B cell (primary cell): ENCODE measurements at regions of chr7 and their contacts with region 1.

Region 1: GRCh38 chr7:149125863-149126661 is at the start of gene ZNF425:
- DNase-seq: peak; percentile 95
- ATAC-seq: peak; percentile 84
- H3K4me3 ChIP-seq: peak within 1 kb of the TSS; percentile 64 to 98 (median 88)
- H3K4me3 Mint-ChIP-seq: peak within 1 kb of the TSS; percentile 97
- H3K27ac ChIP-seq: peak within 1 kb of the TSS; percentile 85 to 89
- H3K27ac Mint-ChIP-seq: peak within 1 kb of the TSS; percentile 99
- H3K4me1 ChIP-seq: peaks cover 12 to 14% of the 10 kb centered on the region in 2 donors
- H3K4me1 Mint-ChIP-seq: peaks cover 22% of the 10 kb centered on the region
- H3K27me3 ChIP-seq: no peaks in the 10 kb centered on the region
- H3K27me3 Mint-ChIP-seq: no peaks in the 10 kb centered on the region
- CTCF ChIP-seq: peak; percentile 89
- total RNA-seq, gene ZNF425: 2.8 and 3.3 TPM in 2 replicates

Region 2: GRCh38 chr7:149195180-149196150 is 69.4 kb after region 1 on chr7 and contains the start of gene ZNF282:
- CTCF ChIA-PET with region 1: interaction called, 13 read pairs
- POLR2A ChIA-PET with region 1: interaction called, 7 read pairs
- intact Hi-C with region 1: loop called (anchors 5 kb)
- DNase-seq: peak; percentile 81
- ATAC-seq: peak; percentile 84
- H3K4me3 ChIP-seq: peak within 1 kb of the TSS; percentile 60 to 92 (median 83)
- H3K4me3 Mint-ChIP-seq: peak within 1 kb of the TSS; percentile 89
- H3K27ac ChIP-seq: peak within 1 kb of the TSS; percentile 47 to 76
- H3K27ac Mint-ChIP-seq: peak within 1 kb of the TSS; percentile 81
- H3K4me1 ChIP-seq: peaks cover 14 to 18% of the 10 kb centered on the region in 2 donors
- H3K4me1 Mint-ChIP-seq: peaks cover 38% of the 10 kb centered on the region
- H3K27me3 ChIP-seq: no peaks in the 10 kb centered on the region
- H3K27me3 Mint-ChIP-seq: no peaks in the 10 kb centered on the region
- CTCF ChIP-seq: peak; percentile 58
- total RNA-seq, gene ZNF282: 25.7 and 26.8 TPM in 2 replicates

Region 3: GRCh38 chr7:149261829-149262617 is 136.0 kb after region 1 on chr7 and contains the start of gene ZNF783:
- CTCF ChIA-PET with region 1: no interaction called
- POLR2A ChIA-PET with region 1: no interaction called
- intact Hi-C with region 1: loop called (anchors 2 kb)
- DNase-seq: peak; percentile 94
- ATAC-seq: peak; percentile 93
- H3K4me3 ChIP-seq: peak within 1 kb of the TSS in 4 of 5 experiments; percentile 64 to 75 (median 68)
- H3K4me3 Mint-ChIP-seq: peak within 1 kb of the TSS; percentile 94
- H3K27ac ChIP-seq: peak within 1 kb of the TSS; percentile 69 to 76
- H3K27ac Mint-ChIP-seq: peak within 1 kb of the TSS; percentile 92
- H3K4me1 ChIP-seq: peaks cover 13 to 17% of the 10 kb centered on the region in 2 donors
- H3K4me1 Mint-ChIP-seq: peaks cover 21% of the 10 kb centered on the region
- H3K27me3 ChIP-seq: no peaks in the 10 kb centered on the region
- H3K27me3 Mint-ChIP-seq: no peaks in the 10 kb centered on the region
- CTCF ChIP-seq: peak; percentile 86
- total RNA-seq, gene ZNF783: 43.8 and 44.8 TPM in 2 replicates

Region 4: DNA sequence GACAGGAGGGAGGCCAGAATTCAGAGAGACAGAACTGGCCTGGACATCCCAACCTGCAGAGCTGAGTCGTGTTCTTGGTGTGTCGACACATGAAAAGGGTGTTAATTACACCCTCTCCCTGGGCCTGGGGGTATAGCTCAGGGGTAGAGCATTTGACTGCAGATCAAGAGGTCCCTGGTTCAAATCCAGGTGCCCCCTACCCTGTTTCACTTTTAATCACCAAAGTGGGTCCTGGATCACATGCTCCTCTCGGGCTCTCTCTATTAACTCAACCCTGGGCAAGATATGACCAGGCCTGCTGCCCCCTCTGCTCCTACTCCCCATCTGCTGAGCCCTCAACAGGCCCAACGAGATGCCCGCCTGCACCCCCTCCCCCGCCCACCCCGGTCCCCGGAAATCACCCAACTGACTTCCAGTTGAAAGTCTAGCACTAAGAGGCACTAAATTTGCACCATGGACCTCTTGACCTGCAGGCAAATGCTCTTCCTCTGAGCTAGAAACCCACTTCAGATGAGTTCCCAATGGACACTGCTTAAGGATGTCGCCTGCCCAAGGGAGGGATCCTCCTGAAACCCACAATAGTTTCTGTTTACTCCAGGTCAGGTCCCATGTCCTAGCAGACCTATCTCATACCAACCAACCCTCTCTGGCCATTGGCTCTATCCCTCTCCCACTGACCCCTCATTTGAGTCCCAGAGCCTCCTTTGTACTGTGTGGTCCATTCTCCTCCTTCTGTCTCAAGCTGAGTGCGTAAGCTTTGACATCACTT is 509.7 kb after region 1 on chr7:
- CTCF ChIA-PET with region 1: no interaction called
- POLR2A ChIA-PET with region 1: no interaction called
- intact Hi-C with region 1: no loop called
- DNase-seq: no peak
- ATAC-seq: no peak
- H3K4me3 ChIP-seq: no peak overlapping the region
- H3K4me3 Mint-ChIP-seq: no peak overlapping the region
- H3K27ac ChIP-seq: no peak overlapping the region
- H3K27ac Mint-ChIP-seq: no peak overlapping the region
- H3K4me1 ChIP-seq: no peaks in the 10 kb centered on the region
- H3K4me1 Mint-ChIP-seq: no peaks in the 10 kb centered on the region
- H3K27me3 ChIP-seq: peaks cover 0 to 16% (median 0%) of the 10 kb centered on the region in 4 experiments
- H3K27me3 Mint-ChIP-seq: peaks cover 19% of the 10 kb centered on the region
- CTCF ChIP-seq: no peak

Region 5: DNA sequence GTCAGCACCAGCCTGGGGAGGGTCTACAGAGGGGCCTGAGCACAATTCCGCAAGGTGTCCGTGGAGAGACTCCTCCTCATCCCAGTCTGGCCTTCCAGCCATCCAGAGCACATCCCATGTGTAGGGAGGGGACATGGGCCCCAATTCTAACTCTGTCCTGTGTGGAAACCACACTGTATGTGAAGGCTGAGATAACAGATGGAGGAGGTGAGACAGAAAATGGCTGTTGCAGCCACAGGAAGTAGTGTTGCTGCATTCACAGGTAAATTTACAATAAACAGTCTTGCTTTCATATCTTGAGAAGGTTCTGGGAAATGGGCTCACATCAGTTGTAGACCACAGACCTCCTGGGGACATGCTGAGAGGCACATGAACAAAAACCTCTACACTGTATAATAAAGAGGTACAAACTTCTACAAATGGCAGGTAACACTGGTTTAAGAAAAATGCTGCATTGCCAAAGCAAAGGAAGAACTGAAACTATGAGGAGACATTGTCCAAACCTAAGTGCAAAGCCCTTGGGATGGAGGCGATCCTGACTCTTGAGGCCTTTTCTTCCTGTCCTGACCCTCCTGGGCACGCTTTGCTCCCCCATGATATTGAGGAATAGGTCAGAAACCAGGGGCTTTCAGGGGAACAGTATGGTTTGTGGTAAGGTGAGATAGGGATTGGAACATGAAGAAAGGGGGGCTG is 1537.9 kb after region 1 on chr7:
- CTCF ChIA-PET with region 1: no interaction called
- POLR2A ChIA-PET with region 1: no interaction called
- intact Hi-C with region 1: no loop called
- DNase-seq: no peak
- ATAC-seq: no peak
- H3K4me3 ChIP-seq: no peak overlapping the region
- H3K4me3 Mint-ChIP-seq: no peak overlapping the region
- H3K27ac ChIP-seq: no peak overlapping the region
- H3K27ac Mint-ChIP-seq: peak overlapping the region; percentile 4
- H3K4me1 ChIP-seq: peaks cover 5 to 19% of the 10 kb centered on the region in 2 donors
- H3K4me1 Mint-ChIP-seq: peaks cover 16% of the 10 kb centered on the region
- H3K27me3 ChIP-seq: no peaks in the 10 kb centered on the region
- H3K27me3 Mint-ChIP-seq: peaks cover 3% of the 10 kb centered on the region
- CTCF ChIP-seq: no peak